AG04449 (cell line): ENCODE measurements at regions of chr6 and their contacts with region 1.

Region 1: DNA sequence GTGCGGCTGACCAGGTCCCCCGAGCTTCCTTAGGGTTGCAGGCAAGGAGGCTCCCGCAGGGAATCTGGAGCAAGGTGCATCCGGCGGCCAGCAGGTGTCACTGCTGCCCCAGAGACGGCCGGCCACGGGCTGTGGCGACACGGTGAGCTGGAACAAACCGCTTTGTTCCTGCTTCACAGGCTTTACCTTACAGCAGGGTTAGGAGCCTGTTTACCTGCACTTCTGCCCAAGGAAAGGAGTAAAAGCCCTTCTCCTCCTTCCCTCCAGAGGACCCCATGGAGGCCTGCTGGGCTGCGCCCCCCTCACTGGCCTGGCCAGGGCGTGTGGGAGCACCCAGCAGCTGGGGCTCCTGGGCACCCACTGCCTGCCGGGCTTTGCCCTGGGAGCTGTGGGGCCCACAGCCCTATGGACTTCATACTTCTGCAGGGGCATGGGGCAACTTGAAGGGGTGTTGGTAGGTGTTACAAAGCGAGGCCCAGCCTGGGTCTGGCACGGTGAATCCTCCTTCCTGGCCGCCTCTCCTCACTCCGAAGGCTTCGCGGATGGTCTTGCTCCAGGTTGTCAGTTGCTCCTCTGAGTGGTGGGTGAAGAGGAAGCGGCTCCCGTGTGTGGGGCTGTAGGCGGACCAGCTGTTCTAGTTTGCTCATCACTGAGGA is 88.4 kb downstream of the CDC5L start:
- DNase-seq: no peak
- H3K4me3 ChIP-seq: no peak overlapping the region
- CTCF ChIP-seq: peak; percentile 94

Region 2: DNA sequence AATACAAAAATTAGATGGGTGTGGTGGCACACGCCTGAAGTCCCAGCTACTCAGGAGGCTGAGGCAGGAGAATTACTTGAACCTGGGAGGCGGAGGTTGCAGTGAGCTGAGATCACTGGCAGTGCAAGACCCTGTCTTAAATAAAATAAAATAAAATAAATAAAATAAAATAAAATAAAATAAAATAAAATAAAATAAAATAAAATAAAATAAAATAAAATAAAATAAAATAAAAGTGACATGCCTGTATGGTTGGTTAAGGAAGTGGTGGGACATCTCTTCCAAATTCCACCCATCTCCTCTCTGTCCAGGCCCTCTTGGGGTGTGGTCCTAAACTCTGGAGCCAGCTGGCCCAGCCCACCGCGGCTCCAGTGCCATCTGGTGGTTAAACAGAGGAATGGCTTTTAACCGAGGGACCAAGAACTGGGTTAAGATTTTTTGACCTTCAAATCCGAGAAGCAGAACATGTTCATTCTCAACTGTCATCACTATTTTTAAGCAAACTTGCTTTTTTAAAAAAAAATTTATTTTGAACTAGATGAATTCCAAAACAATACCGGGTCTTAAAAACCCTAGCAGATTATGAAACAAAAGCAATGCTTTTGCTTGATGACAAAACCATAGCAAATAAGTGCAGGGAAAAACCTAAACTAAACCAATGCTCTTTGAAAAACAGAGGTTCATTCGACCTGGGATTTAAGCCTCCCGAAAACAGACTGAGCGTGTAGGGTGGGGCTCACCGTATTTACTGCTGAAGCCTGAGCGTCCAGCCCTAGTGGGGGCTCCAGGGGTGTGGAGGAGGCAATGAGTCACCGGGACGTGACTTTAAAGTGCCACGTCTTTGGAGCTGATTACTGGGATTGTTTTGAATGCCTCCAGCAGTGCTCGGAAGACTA is 19.6 kb before region 1 on chr6:
- CTCF ChIA-PET with region 1: interaction called, 158 read pairs
- POLR2A ChIA-PET with region 1: no interaction called
- DNase-seq: no peak
- H3K4me3 ChIP-seq: no peak overlapping the region
- CTCF ChIP-seq: peak; percentile 79

Region 3: DNA sequence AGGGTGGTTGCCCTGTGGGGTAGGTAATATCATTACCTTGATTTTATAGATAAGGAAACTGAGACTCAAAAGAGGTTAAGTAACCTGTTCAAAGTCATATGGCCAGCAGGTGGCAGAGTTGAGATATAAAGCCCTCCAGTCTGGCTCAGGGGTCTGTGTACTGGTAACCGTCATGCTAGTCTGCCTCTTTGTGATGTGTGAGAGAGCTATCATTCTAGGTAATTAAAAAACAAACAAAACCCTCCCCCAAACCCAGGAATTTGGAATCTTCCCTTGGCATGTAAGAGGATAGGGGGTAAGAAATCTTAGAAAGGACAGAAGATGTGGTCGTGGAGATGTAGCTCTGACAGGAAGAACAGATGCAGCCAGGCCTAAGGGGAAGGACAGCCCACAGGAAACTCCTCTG is 117.6 kb after region 1 on chr6:
- CTCF ChIA-PET with region 1: interaction called, 27 read pairs
- POLR2A ChIA-PET with region 1: no interaction called
- DNase-seq: no peak
- H3K4me3 ChIP-seq: no peak overlapping the region
- CTCF ChIP-seq: peak; percentile 51

Region 4: GRCh38 chr6:44630125-44631028 is 154.5 kb after region 1 on chr6:
- CTCF ChIA-PET with region 1: interaction called, 110 read pairs
- POLR2A ChIA-PET with region 1: no interaction called
- DNase-seq: no peak
- H3K4me3 ChIP-seq: no peak overlapping the region
- CTCF ChIP-seq: peak; percentile 86

Region 5: DNA sequence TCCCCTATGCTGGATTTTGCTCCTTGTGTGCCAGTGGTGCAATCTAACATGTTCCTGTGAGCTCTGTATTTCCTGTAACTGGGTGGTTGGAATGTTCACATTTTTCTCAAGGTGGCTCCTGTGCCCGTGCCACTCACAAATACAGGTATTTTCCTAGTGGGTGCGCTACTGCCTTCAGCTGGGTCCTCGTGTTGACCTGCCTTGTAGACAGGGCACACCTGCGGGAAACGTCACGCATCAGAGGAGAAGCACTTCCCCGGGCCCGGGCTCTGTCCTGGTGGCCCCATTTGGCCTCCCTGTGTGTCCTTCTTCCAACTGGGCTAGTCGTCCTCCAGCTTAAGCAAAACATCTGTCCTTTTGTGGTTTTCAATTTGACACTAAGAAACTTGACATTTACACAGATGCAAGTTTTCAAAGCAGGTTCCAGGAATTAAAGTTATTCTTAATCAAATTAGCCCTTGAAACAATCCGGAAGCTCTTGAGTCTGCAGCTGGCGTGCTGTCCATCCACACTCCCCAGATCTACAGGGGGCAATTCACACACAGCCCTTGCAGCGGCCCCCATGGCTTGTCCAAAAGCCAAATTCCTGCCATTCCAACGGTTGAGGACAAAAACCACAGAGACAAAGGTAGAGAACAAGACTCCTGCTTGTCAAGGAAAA is 186.7 kb after region 1 on chr6:
- CTCF ChIA-PET with region 1: interaction called, 153 read pairs
- POLR2A ChIA-PET with region 1: no interaction called
- DNase-seq: peak; percentile 72
- H3K4me3 ChIP-seq: no peak overlapping the region
- CTCF ChIP-seq: no peak

Region 6: GRCh38 chr6:45714741-45715507 is 1239.0 kb after region 1 on chr6:
- CTCF ChIA-PET with region 1: interaction called, 13 read pairs
- POLR2A ChIA-PET with region 1: no interaction called
- DNase-seq: peak; percentile 68
- H3K4me3 ChIP-seq: no peak overlapping the region
- CTCF ChIP-seq: peak; percentile 78